ENCODE measurements at regions of chr22 and their contacts with region 1.

Region 1: DNA sequence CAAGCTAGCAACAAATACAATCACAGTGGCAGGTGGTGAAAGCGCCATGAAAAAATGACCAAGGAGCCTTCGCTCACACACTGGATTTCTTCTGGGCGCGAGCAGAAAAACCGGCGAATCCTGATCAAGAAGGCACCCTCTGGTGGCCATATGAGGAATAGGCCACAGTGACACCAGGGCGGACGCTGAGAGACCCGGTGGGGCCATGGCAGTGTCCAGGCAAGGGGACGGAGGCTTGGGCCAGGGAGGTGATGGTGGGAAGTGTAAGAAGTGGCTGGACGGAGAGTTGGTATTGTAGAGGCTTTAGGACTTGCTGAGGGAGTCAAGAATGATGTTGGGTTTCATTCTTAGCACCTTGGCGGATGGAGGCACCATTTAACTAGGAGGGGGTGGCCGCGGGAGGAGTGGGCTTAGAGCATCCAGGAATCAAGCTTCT is 16.9 kb upstream of the RAC2 start:
- DNase-seq: peak; percentile 76
- H3K4me3 Mint-ChIP-seq: peak overlapping the region; percentile 17
- H3K27ac Mint-ChIP-seq: peak overlapping the region; percentile 65
- H3K4me1 Mint-ChIP-seq: peaks cover 20% of the 10 kb centered on the region
- H3K27me3 Mint-ChIP-seq: no peaks in the 10 kb centered on the region

Region 2: GRCh38 chr22:37166675-37167066 is 94.2 kb before region 1 on chr22:
- CTCF ChIA-PET with region 1: interaction called, 18 read pairs
- POLR2A ChIA-PET with region 1: no interaction called
- intact Hi-C with region 1: no loop called
- DNase-seq: peak; percentile 92
- H3K4me3 Mint-ChIP-seq: peak overlapping the region; percentile 68
- H3K27ac Mint-ChIP-seq: peak overlapping the region; percentile 67
- H3K4me1 Mint-ChIP-seq: peaks cover 79% of the 10 kb centered on the region
- H3K27me3 Mint-ChIP-seq: no peaks in the 10 kb centered on the region

Region 3: DNA sequence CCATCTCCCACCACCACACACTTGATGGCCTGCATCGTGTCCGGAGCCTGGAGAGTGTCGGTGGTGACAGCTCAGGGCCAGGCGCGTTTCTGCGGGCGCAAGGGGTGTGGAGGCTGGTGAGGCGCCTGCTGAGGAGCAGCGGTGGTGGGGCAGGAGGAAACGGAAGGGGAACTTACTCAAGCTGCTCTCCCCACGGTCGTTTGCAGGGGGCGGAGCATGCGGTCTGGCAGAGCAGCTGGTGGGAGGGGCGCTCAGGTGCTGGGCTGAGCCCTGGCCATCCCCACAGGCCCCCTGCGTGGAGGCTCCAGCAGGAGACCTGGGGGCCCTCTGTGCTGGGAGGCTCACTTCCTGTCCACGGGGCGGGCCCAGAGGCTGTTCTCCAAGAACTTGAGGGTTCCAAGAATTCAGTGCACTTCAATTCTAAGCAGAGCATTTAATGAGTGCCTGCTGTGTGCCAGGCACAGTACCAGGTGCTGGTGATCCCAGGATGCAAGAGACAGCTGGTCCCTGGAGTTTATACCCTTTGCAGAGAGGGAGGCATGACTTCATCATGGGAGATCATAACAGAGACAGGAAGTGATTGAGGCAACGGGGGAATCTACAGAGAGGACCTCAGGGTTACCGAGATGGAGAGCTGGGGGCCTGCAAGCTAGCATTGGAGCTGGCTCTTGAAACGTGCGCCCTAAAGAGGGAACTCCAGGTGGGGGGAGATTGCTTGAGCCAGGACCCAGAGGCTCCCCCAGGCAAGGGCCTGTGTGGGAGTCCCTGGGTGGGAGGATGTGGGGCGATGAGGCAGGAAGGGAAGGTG is 16.6 kb before region 1 on chr22 and contains the start of gene RAC2:
- CTCF ChIA-PET with region 1: interaction called, 193 read pairs
- POLR2A ChIA-PET with region 1: interaction called, 5 read pairs
- intact Hi-C with region 1: loop called (anchors 1 kb)
- DNase-seq: peak; percentile 96
- H3K4me3 Mint-ChIP-seq: peak within 1 kb of the TSS; percentile 99
- H3K27ac Mint-ChIP-seq: peak within 1 kb of the TSS; percentile 99
- H3K4me1 Mint-ChIP-seq: peaks cover 42% of the 10 kb centered on the region
- H3K27me3 Mint-ChIP-seq: no peaks in the 10 kb centered on the region
- total RNA-seq, gene RAC2: 714 to 727 TPM

Region 4: DNA sequence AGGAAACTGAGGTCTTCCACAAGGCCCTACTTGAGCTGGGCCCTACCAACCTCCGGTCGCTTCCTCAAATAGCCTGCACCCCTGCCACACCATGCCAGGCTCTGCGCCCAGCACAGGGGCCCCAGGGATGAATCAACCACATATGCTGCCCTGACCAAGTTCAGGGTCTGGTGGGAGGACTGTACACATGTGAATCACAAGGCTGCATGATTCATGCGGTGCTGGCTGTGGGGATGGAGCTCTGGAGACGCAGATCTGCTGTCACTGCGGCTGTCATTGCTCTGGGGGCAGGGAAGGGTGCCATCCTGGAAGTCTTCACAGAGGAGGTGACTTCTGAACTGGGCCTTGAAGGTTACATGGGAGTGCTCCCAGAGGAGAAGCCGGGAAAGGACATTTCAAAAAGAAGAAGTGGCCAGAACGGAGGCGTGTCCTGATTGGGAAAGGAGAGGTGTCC is 42.9 kb after region 1 on chr22:
- CTCF ChIA-PET with region 1: interaction called, 10 read pairs
- POLR2A ChIA-PET with region 1: no interaction called
- intact Hi-C with region 1: no loop called
- DNase-seq: peak; percentile 90
- H3K4me3 Mint-ChIP-seq: no peak overlapping the region
- H3K27ac Mint-ChIP-seq: peak overlapping the region; percentile 91
- H3K4me1 Mint-ChIP-seq: peaks cover 89% of the 10 kb centered on the region
- H3K27me3 Mint-ChIP-seq: no peaks in the 10 kb centered on the region

Region 5: DNA sequence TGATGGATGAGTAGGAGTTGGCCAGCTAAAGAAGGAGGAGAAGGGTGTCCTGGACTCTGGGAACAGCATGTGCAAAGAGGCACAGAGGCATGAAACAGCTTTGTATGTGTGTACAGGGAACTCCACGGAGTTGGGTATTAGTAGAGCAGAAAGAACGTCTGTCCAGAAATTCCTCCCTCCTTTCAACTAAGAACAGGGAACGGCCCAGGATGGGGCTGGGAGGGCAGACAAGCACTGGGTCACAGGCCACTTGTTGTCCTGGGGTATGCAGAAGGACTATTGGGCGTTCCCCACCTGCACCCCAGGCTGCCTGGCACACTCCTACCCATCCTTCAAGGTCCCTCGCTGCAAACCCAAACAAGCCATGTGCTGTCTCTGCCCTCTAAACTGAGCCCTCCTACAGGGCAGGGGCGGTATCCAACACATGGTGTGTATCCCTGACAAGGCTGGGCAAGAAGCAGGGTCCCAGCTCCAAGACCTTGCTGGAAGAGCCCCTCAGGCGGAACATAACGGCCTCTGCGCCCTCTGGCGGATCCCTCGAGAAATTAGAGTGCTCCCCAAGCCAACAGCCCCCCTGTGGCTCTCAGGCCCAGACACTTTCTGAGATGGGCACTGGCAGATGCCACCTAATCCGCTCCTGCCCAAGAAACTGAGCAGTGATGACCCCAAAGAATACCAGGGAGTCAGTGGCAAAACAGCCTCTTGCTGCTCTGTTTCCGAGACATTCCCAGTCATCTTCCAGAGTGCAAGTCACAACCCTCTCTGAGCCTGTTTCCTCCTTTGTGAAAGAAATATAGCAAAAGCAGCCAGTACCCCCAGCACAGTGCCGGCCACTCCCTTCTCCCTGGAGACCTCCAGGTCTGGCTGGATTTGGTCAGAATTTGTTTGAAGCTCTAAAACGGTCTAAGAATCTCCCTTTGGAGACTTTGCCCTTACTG is 168.0 kb after region 1 on chr22:
- CTCF ChIA-PET with region 1: interaction called, 20 read pairs
- POLR2A ChIA-PET with region 1: no interaction called
- intact Hi-C with region 1: no loop called
- DNase-seq: peak; percentile 66
- H3K4me3 Mint-ChIP-seq: no peak overlapping the region
- H3K27ac Mint-ChIP-seq: no peak overlapping the region
- H3K4me1 Mint-ChIP-seq: peaks cover 27% of the 10 kb centered on the region
- H3K27me3 Mint-ChIP-seq: peaks cover 55% of the 10 kb centered on the region